GM10248 (cell line): ENCODE measurements at regions of chr2 and their contacts with region 1.

Region 1: GRCh38 chr2:152743002-152743401 is 24.6 kb downstream of the ARL6IP6 start:
- DNase-seq: peak; percentile 16
- CTCF ChIP-seq: peak; percentile 58

Region 2: GRCh38 chr2:152730591-152731303 is 12.3 kb before region 1 on chr2:
- CTCF ChIA-PET with region 1: interaction called, 46 read pairs
- POLR2A ChIA-PET with region 1: no interaction called
- DNase-seq: no peak
- CTCF ChIP-seq: no peak

Region 3: DNA sequence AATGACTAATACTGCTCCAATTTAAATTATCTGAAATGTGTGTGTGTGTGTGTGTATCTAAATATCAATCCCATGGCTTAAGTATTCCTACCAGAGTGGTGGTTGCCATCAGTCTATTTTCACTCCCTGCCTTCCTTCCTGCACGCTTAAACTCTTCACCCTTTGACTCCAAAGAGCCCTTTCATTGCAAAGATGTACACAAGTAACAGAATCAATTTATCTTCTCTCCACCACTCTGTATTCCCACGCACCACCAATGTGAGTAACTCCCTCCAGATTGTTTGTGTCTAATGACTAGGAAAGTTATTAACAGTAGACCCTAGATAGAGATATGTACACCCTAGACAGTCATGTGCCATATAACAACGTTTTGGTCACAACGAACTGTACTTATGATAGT is 18.2 kb after region 1 on chr2:
- CTCF ChIA-PET with region 1: interaction called, 10 read pairs
- POLR2A ChIA-PET with region 1: no interaction called
- DNase-seq: no peak
- CTCF ChIP-seq: no peak

Region 4: DNA sequence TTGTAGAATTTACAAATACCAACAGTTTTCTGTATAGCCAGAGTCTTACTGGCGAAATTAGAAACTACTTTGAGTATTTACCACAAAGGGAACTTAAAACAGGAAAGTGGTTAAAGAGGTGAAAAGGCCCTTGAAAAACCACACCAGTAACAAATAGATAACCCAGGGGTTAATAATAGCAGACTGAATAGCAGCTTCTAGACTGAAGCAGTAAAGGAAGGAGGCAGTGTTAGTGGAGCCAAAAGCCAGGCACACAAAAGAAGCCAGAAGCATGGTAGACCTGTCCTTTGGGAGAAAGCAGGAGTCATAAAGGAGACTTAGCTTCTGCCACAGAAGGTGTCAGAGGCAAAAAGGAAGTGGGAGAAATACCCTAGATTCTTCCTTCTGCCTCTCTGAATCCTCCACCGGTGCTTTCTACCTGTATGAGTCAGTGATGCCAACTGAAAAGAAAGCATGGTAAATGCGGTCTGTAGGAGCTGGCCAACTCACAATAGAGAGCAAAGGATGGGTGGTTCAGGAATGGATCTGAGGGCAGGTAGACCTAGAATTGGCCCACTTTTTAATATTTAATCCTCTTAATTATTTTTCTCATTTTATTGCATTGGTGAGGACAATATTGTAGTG is 72.7 kb after region 1 on chr2:
- CTCF ChIA-PET with region 1: no interaction called
- POLR2A ChIA-PET with region 1: no interaction called
- DNase-seq: no peak
- CTCF ChIP-seq: no peak